ENCODE measurements at regions of chr9 and their contacts with region 1.

Region 1: GRCh38 chr9:27548055-27548741 is 18.6 kb upstream of the MOB3B start:
- DNase-seq: peak in 1 of 2 experiments; percentile 45
- ATAC-seq: peak; percentile 74 to 87
- H3K4me3 ChIP-seq: no peak overlapping the region
- H3K27ac ChIP-seq: no peak overlapping the region
- H3K4me1 ChIP-seq: 0 out of 3 replicates have a peak, but pooled peaks cover 4% of the 10 kb centered on the region
- CTCF ChIP-seq: peak; percentile 74
- EP300 ChIP-seq: no peak
- POLR2A ChIP-seq: no peak
- RAD21 ChIP-seq: peak; percentile 77 to 82; a peak in 4 of 5 replicates

Region 2: DNA sequence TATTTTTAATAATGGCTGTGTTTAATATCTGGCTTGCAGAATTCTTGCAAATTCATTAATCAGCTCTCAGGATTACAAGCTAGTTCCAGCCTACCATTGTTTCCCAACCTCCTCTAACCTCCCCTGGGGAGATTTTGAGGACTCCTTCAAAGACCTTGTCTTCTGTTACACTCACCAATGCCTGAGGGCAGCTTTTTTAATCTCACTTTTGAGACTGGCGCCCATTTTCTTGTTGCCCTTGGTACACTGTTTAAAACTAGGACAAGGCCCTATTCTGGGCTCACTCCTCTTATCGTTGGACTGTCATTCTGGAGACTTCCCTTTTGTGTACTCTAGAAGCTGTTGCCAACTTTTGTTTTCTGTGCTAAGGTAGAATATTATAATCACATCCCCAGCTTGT is 237.6 kb before region 1 on chr9:
- CTCF ChIA-PET with region 1: interaction called, 11 read pairs
- POLR2A ChIA-PET with region 1: no interaction called
- DNase-seq: no peak
- ATAC-seq: no peak
- H3K4me3 ChIP-seq: no peak overlapping the region
- H3K27ac ChIP-seq: no peak overlapping the region
- H3K4me1 ChIP-seq: no peaks in the 10 kb centered on the region
- CTCF ChIP-seq: no peak
- EP300 ChIP-seq: no peak
- POLR2A ChIP-seq: no peak
- RAD21 ChIP-seq: no peak

Region 3: GRCh38 chr9:27333241-27334052 is 214.8 kb before region 1 on chr9:
- CTCF ChIA-PET with region 1: interaction called, 266 read pairs
- POLR2A ChIA-PET with region 1: interaction called, 4 read pairs
- DNase-seq: peak; percentile 59 to 71
- ATAC-seq: peak; percentile 58 to 84
- H3K4me3 ChIP-seq: no peak overlapping the region
- H3K27ac ChIP-seq: peak overlapping the region; percentile 53; a peak in 4 of 6 replicates
- H3K4me1 ChIP-seq: peaks cover 6% of the 10 kb centered on the region; the same call in 2 of the 3 replicates
- CTCF ChIP-seq: peak; percentile 89
- EP300 ChIP-seq: no peak
- POLR2A ChIP-seq: no peak
- RAD21 ChIP-seq: peak; percentile 90 to 97

Region 4: GRCh38 chr9:27353474-27354229 is 194.5 kb before region 1 on chr9:
- CTCF ChIA-PET with region 1: interaction called, 14 read pairs
- POLR2A ChIA-PET with region 1: no interaction called
- DNase-seq: no peak
- ATAC-seq: peak in 1 of 2 experiments; percentile 71; a peak in 3 of 6 replicates
- H3K4me3 ChIP-seq: no peak overlapping the region
- H3K27ac ChIP-seq: no peak overlapping the region
- H3K4me1 ChIP-seq: no peaks in the 10 kb centered on the region
- CTCF ChIP-seq: no peak
- EP300 ChIP-seq: no peak
- POLR2A ChIP-seq: no peak
- RAD21 ChIP-seq: no peak

Region 5: DNA sequence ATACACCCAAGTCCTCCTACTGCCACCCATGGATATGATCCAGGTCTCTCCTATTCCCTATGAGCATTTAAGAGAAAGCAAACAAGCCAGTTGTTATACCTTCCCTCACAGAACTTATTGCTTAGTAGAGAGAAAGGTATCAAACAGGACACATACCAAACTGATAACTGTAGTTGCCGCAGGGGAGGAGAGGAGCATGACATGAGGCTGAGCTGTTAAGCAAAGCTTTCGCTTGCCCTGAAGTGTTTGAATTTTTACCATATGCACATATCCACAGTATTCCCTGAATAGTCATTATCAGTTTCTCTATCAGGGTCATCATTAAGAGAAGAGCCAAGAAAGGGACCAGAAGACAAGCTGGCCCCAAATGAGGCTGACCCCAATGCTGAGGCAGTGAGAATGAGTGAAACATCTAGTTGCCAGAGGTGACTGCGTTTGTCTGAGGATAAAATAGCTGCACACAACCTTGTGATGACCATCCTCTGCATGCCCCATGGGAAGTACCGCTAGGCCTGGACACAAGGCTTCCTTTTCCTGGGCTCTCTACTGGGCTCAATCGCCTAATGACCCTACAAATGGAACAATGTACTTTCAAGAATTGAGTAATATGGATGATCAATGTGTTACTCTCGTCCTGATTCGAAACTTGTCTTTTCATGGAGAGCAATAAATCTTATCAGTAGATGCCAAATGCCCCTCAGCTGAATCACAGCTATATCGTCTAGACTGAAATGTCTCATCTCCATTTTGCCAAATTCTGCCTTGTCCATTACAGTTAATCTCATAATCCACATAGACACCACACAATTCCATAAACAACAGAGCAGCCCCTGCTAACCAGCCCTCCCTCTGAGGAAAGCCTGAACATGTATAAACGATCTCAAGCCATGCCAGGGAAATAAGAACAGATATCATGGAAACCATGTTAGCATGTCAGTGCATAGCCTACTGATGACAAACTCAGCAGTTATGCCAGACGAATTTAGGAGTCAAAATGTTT is 28.4 kb before region 1 on chr9:
- CTCF ChIA-PET with region 1: interaction called, 12 read pairs
- POLR2A ChIA-PET with region 1: no interaction called
- DNase-seq: peak in 1 of 2 experiments; percentile 49
- ATAC-seq: peak; percentile 84 to 88
- H3K4me3 ChIP-seq: no peak overlapping the region
- H3K27ac ChIP-seq: peak overlapping the region; percentile 68 to 83
- H3K4me1 ChIP-seq: peaks cover 30% of the 10 kb centered on the region
- CTCF ChIP-seq: no peak
- EP300 ChIP-seq: no peak
- POLR2A ChIP-seq: no peak
- RAD21 ChIP-seq: no peak

Region 6: GRCh38 chr9:27561685-27562084 is 13.5 kb after region 1 on chr9:
- CTCF ChIA-PET with region 1: interaction called, 14 read pairs
- POLR2A ChIA-PET with region 1: no interaction called
- DNase-seq: no peak
- ATAC-seq: no peak
- H3K4me3 ChIP-seq: no peak overlapping the region
- H3K27ac ChIP-seq: no peak overlapping the region
- H3K4me1 ChIP-seq: no peaks in the 10 kb centered on the region
- CTCF ChIP-seq: no peak
- EP300 ChIP-seq: no peak
- POLR2A ChIP-seq: no peak
- RAD21 ChIP-seq: no peak

Measured in A549 (cell line).